Ovary (tissue), 10 donors: ENCODE measurements at regions of chr3 and their contacts with region 1.

Region 1: DNA sequence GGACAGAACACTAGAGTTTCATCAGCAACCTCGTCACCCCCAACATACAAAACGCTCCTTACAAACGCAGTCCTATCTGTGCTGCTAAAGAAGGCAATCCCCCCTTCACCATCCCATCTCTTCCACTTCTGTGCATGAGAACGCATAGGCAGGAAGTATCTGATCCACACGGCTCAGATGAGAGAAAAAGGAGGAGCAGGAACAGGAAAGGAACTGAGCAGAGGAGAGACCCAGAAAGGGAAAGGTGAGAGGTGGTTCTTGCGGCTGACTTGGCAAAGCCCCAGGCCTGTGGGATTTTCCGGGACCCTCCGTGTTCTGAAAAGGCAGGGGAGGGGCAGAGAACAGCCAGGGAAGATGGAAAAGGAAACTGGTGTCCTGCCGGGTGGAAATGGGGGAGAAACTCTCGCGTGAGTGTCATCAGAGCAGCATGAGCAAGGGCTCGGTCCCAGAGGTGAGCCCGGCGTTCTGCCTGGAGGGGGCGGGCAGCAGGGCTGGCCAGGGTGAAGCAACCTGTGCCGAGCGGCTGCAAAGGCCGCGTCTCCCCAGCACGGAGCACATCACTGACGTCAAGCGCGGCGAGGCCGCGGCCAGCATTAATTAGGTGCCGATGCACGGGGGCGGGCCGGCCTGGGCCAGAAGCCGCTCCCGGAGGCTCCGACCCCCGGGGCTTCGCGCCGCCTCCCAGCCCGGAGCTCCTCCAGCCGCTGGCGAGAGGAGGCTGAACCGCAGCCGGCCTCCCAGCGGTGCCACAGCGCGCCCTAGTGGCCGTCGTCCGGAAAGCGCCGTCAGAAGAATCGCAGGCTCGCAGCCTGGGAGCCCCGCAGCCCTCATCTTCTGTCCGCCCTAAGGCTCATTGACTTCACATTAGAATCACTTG is 35.8 kb downstream of the CPN2 start:
- DNase-seq: peak; percentile 92 to 96 (median 94)
- H3K4me3 ChIP-seq: peak overlapping the region; percentile 18
- H3K27ac ChIP-seq: peak overlapping the region; percentile 28 to 80
- H3K4me1 ChIP-seq: peaks cover 11% of the 10 kb centered on the region
- H3K27me3 ChIP-seq: no peaks in the 10 kb centered on the region
- CTCF ChIP-seq: peak; percentile 97
- EP300 ChIP-seq: peak; percentile 77
- POLR2A ChIP-seq: peak; percentile 21

Region 2: GRCh38 chr3:193605876-193606275 is 709.5 kb before region 1 on chr3:
- intact Hi-C with region 1: no loop called
- DNase-seq: peak in 1 of 5 donors; percentile 23
- H3K4me3 ChIP-seq: no peak overlapping the region
- H3K27ac ChIP-seq: no peak overlapping the region
- H3K4me1 ChIP-seq: peaks cover 2% of the 10 kb centered on the region
- H3K27me3 ChIP-seq: no peaks in the 10 kb centered on the region
- CTCF ChIP-seq: no peak
- EP300 ChIP-seq: no peak
- POLR2A ChIP-seq: no peak

Region 3: DNA sequence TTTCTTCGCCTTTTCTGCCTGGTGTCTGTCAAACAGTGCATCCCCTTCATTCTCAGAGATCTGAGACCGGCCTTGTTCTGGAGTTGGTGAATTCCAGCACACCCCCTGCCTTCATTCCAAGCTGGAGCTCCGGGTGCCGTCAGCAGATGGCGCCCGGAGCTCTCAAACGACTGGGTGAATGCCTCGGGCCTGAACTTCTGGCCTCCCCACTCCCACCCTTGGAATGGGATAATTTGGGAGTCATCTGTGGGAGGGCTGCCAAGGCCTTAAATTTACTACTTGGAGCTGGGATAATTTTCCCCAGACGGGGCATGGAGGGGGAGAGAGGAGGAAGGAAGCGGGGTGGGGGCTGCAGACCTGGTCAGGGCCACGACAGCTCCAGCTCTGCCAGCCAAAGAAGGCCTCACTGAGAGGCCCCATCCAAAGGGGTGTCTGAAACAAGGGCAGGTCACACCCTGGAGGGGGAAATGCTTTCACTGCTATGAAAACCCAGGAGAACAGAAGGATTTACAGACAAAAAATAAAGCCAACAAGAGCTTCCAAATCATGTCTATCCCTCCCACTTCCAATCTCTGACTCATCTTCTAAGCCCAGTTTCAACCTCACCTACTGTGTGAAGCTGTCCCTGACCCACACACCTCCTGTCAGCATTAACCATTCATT is 534.4 kb before region 1 on chr3:
- intact Hi-C with region 1: loop called (anchors 2 to 5 kb)
- DNase-seq: peak; percentile 79 to 87 (median 84)
- H3K4me3 ChIP-seq: no peak overlapping the region
- H3K27ac ChIP-seq: peak overlapping the region in 1 of 2 donors; percentile 26
- H3K4me1 ChIP-seq: no peaks in the 10 kb centered on the region
- H3K27me3 ChIP-seq: no peaks in the 10 kb centered on the region
- CTCF ChIP-seq: peak; percentile 59 to 78 (median 71)
- EP300 ChIP-seq: no peak
- POLR2A ChIP-seq: peak; percentile 27

Region 4: DNA sequence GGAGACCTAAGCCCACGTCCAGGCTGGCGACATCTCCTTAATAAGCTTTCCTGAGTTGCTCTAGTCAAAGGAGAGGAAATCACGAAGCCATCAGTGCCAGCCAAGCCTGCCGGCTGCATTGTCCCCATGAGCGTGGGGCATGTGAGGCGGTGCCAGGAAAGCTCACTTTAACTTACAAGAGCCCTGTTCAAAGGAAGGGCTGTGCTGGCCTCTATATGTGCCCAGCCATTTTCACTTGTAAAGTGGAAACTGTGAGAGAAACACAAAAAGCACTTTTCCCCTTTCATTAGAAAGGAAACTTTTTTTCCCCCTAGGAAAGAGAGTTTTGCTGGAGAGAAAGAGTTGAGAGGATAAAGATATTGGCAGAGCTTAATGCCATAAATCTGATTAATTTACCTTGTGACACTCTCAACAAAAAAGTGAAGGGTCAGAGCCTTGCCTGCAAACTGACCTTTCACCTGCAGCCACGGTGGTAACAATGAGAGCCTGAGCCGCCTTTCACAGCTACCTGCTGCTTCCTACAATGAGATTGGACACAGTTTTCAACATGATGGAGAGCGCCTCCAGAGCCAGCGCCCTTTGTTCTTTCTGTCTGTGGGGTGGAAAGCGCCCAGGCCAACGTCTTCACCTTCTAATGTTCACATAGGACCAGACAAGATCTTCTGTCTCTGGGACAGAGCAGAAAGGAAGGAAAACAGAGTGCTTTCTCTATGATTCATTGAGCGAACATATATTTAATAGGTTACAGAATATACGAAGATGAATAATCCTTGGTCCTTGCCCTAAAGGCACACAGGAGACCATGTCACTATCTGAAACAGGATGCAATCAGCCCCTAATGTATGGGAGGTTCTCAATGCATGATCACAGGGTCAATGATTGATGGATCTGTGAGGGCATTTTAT is 412.5 kb before region 1 on chr3:
- intact Hi-C with region 1: loop called in 1 of 4 experiments (anchors 5 kb)
- DNase-seq: no peak
- H3K4me3 ChIP-seq: no peak overlapping the region
- H3K27ac ChIP-seq: no peak overlapping the region
- H3K4me1 ChIP-seq: peaks cover 14% of the 10 kb centered on the region
- H3K27me3 ChIP-seq: no peaks in the 10 kb centered on the region
- CTCF ChIP-seq: no peak
- EP300 ChIP-seq: no peak
- POLR2A ChIP-seq: no peak

Region 5: GRCh38 chr3:194003125-194004057 is 311.9 kb before region 1 on chr3:
- intact Hi-C with region 1: loop called in 2 of 4 experiments (anchors 5 to 10 kb)
- DNase-seq: peak; percentile 90 to 94 (median 92)
- H3K4me3 ChIP-seq: peak overlapping the region; percentile 44
- H3K27ac ChIP-seq: peak overlapping the region; percentile 23 to 69
- H3K4me1 ChIP-seq: peaks cover 11% of the 10 kb centered on the region
- H3K27me3 ChIP-seq: no peaks in the 10 kb centered on the region
- CTCF ChIP-seq: peak in 1 of 3 donors; percentile 0
- EP300 ChIP-seq: no peak
- POLR2A ChIP-seq: peak; percentile 16

Region 6: DNA sequence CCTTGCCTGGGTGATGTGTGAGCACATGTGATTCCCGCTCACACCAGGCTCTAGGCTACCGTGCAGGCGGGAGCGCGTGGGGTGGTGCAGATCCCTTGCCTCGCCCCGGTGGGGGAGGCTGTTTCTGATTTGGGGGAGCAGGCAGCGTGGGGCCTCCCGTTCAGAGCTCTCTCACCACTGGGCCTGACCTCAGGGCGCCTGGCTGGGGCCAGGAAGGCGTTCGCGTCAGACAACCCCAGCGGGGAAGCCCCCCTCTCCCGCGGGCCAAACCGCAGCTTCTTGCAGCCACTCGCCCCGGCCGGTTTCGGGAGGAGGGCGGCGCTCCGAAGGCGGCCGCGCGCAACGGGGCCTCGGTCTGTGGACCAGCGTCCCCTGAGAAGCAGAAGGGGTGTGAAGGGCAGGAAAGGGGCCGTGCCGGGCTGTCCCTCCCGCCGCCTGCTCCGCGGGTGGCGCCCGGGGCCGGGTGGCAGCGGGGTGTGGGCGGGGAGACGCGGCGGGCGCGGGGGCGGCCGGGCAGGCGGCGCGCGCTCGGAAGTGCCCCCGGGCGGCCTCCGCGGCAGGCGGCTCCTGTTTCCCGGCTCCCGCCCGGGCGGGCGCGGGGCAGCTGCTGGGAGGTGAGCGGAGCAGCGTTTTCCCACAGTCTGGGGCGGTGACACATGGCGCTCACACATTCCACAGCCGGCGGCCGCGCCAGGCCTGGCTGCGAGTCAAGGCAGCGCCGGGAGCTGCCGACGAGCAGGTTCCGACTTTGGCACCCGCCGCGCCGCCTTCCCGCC is 244.5 kb before region 1 on chr3:
- intact Hi-C with region 1: loop called in 1 of 4 experiments (anchors 10 kb)
- DNase-seq: peak; percentile 71 to 84 (median 83)
- H3K4me3 ChIP-seq: peak overlapping the region; percentile 36
- H3K27ac ChIP-seq: peak overlapping the region in 1 of 2 donors; percentile 56
- H3K4me1 ChIP-seq: peaks cover 7% of the 10 kb centered on the region
- H3K27me3 ChIP-seq: no peaks in the 10 kb centered on the region
- CTCF ChIP-seq: no peak
- EP300 ChIP-seq: no peak
- POLR2A ChIP-seq: peak; percentile 14

Region 7: DNA sequence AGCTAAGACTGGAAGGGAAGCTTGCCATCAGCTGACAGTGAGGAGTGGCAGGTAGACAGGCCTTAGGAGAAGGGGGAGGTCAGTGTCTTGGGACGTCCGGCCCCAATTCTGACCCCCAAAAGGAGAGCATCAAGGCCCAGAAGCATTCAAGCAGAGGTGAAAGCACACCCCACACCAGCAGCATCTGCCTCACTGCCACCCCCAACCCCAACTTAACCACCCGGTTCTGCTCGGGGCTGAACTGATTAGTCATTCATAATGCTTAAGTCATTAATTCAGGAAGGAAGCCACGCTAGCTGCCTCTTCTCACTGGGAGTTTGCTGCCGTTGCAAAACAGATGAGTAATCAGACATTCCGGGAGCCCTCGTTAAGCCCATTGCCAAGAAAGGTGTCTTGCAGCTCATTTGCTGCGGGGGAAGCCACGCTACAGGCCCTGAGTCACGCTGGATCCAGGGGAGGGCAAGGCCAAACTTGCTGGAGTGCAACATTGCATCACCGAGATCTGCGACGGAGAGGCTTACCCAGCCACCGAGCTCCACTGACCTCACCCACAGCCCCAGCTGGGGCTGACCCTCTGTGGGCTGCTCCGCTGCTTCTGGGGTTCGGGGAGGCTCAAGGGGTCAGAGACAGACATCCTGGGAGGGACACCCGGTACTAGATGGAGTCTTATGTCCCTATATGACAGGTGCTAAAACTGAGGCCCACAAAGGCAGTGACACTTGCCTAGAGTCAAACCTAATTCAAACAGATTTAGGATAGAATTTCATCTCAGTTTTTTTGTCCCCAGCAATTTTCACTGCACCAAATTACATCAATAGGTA is 225.8 kb before region 1 on chr3:
- intact Hi-C with region 1: no loop called
- DNase-seq: peak; percentile 82 to 94 (median 87)
- H3K4me3 ChIP-seq: no peak overlapping the region
- H3K27ac ChIP-seq: peak overlapping the region in 1 of 2 donors; percentile 39
- H3K4me1 ChIP-seq: peaks cover 4% of the 10 kb centered on the region
- H3K27me3 ChIP-seq: no peaks in the 10 kb centered on the region
- CTCF ChIP-seq: no peak
- EP300 ChIP-seq: peak; percentile 71
- POLR2A ChIP-seq: no peak

Region 8: DNA sequence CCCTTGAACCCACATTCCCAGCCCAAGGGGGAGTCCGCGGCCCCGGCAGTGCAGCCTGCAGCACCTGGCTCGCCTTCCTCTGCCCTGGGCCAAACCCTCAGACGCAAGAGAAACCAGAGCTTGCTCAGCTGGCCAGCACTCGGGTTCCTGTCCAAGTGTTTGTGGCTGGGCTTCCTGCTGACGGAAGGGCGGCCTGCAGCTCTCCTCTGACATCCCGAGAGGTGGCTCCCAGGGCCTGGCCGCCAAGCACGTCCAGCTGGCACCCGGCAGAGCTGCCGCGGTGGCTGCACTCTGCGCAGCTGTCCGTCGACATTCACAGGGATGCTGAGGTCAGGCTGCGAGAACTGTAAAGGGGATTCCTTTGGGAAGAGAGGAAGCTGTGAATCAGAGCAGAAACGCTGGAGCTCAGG is 49.8 kb before region 1 on chr3:
- intact Hi-C with region 1: loop called in 3 of 4 experiments (anchors 5 to 10 kb)
- DNase-seq: peak; percentile 83 to 92 (median 87)
- H3K4me3 ChIP-seq: no peak overlapping the region
- H3K27ac ChIP-seq: peak overlapping the region in 1 of 2 donors; percentile 47
- H3K4me1 ChIP-seq: peaks cover 20% of the 10 kb centered on the region
- H3K27me3 ChIP-seq: no peaks in the 10 kb centered on the region
- CTCF ChIP-seq: no peak
- EP300 ChIP-seq: peak; percentile 11
- POLR2A ChIP-seq: no peak